ENCODE measurements at regions of chr11 and their contacts with region 1.

Region 1: GRCh38 chr11:44286268-44286880 is 23.6 kb downstream of the ALX4 start:
- DNase-seq: peak; percentile 55
- ATAC-seq: peak; percentile 79
- H3K4me3 Mint-ChIP-seq: no peak overlapping the region
- H3K27ac Mint-ChIP-seq: peak overlapping the region; percentile 16
- H3K4me1 Mint-ChIP-seq: no peaks in the 10 kb centered on the region
- H3K27me3 Mint-ChIP-seq: peaks cover 16% of the 10 kb centered on the region
- CTCF ChIP-seq: peak; percentile 44

Region 2: DNA sequence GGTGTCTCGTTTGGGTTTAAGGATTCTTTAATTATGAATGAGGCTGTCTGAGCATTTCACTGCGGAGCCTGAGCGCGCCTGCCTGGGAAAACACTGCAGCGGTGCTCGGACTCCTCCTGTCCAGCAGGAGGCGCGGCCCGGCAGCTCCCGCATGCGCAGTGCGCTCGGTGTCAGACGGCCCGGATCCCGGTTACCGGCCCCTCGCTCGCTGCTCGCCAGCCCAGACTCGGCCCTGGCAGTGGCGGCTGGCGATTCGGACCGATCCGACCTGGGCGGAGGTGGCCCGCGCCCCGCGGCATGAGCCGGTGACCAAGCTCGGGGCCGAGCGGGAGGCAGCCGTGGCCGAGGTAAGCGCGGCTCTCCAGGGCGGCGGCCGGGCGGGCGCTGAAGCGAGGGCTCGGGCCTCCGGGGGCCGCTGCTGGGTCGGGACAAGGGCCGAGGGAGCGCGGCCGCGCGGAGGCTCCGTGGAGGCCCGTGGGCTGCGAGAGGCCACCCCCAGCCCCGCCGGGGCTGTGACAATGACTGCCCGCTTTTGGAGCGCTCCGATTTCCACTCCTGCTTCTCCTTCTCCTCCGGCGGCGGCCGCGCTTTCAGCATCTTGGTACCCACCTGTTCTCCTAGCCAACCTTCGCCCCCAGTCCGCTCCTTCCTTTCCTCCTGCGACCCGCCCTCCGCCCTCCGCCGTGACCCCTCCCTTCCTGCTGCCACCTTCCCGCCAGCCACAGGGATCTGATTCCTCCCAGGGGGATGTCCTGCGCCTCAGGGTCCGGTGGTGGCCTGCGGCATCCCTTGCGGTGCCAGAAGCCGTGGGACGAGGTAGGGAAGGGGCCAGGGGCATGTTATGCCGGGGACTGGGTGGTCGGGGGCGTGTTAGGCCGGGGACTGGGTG is 190.6 kb before region 1 on chr11 and contains the start of gene EXT2:
- CTCF ChIA-PET with region 1: no interaction called
- POLR2A ChIA-PET with region 1: no interaction called
- intact Hi-C with region 1: loop called (anchors 10 kb)
- DNase-seq: peak; percentile 85
- ATAC-seq: peak; percentile 94
- H3K4me3 Mint-ChIP-seq: peak within 1 kb of the TSS; percentile 87
- H3K27ac Mint-ChIP-seq: no peak within 1 kb of the TSS
- H3K4me1 Mint-ChIP-seq: peaks cover 24% of the 10 kb centered on the region
- H3K27me3 Mint-ChIP-seq: no peaks in the 10 kb centered on the region
- CTCF ChIP-seq: no peak
- total RNA-seq, gene EXT2: 21.9 and 22.1 TPM in 2 replicates

Region 3: DNA sequence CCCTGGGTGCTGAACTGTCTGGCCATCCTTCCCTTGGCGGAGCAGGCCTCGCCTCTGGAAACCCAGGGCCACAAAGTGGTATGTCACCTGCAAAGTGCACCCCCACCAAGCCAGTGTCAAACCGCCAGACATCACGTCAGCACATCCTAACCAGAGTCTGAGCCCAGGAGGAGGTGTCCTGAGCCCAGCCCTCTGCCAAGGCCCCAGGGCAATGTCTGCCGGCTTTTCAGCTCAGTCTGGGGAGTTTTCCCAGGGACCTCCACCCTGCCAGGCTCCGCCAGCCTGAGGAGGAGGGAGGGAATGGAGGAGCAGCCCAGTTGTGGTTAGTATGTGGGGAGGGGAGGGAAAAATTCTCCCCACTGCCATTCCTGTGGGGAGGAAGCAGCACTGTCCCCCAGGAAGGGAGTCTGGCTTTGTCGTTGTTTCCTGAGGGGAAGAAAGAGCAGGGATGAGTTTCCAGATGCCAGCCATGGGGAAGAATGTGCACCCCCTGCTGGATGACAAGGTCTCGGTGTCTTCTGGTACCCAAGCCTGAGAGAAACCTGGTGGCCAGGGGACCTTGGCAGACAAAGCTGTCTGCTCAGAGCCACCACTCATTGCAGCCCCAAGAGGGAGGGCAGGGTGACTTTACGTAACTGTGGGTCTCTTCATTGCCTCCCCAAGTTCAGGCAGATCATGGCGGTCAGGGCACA is 197.7 kb after region 1 on chr11:
- CTCF ChIA-PET with region 1: no interaction called
- POLR2A ChIA-PET with region 1: no interaction called
- intact Hi-C with region 1: loop called (anchors 1 kb)
- DNase-seq: no peak
- ATAC-seq: no peak
- H3K4me3 Mint-ChIP-seq: no peak overlapping the region
- H3K27ac Mint-ChIP-seq: no peak overlapping the region
- H3K4me1 Mint-ChIP-seq: no peaks in the 10 kb centered on the region
- H3K27me3 Mint-ChIP-seq: peaks cover 15% of the 10 kb centered on the region
- CTCF ChIP-seq: no peak

Region 4: GRCh38 chr11:44538375-44539054 is 252.1 kb after region 1 on chr11:
- CTCF ChIA-PET with region 1: interaction called, 27 read pairs
- POLR2A ChIA-PET with region 1: no interaction called
- intact Hi-C with region 1: no loop called
- DNase-seq: peak; percentile 67
- ATAC-seq: peak; percentile 97
- H3K4me3 Mint-ChIP-seq: no peak overlapping the region
- H3K27ac Mint-ChIP-seq: no peak overlapping the region
- H3K4me1 Mint-ChIP-seq: peaks cover 3% of the 10 kb centered on the region
- H3K27me3 Mint-ChIP-seq: peaks cover 19% of the 10 kb centered on the region
- CTCF ChIP-seq: peak; percentile 37

Region 5: DNA sequence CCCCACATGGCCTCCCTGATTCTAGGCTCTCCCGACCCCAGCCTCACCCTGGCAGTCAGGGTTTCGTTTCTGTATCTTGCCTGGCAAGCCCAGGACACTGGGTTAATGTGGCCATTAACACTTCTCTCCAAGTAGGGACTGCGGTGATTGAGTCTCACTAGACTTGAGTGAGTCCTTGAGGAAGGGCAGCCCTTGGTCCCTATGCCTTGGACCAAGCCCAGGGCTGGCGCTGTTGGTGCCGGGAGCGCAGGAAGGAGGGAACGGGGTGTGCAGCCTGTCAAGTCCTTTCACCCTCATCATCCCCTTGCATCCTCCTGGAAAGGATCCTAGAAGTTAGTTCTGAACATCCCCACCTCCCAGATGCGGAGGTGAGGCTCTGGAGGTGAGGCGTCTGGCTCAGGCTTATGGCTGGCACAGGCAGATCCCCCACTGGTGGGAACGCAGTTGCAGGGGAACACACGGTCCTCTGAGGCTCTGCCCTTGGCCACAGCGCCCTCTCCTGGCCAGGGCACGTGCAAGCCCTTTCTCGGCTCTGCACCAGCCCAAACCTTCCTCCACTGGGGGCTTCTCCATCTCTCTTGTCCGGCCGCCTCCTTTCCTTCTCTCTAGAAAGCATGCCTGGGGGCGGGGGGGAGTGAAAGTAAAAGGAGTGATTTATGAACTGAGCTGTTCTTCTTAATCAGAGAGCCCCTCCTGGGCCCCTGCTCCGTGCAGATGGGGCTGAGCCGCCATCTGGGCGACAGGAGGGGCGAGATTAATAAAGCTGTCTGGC is 607.7 kb after region 1 on chr11:
- CTCF ChIA-PET with region 1: no interaction called
- POLR2A ChIA-PET with region 1: no interaction called
- intact Hi-C with region 1: loop called (anchors 5 kb)
- DNase-seq: no peak
- ATAC-seq: peak; percentile 60
- H3K4me3 Mint-ChIP-seq: no peak overlapping the region
- H3K27ac Mint-ChIP-seq: no peak overlapping the region
- H3K4me1 Mint-ChIP-seq: no peaks in the 10 kb centered on the region
- H3K27me3 Mint-ChIP-seq: peaks cover 8% of the 10 kb centered on the region
- CTCF ChIP-seq: no peak

Measured in activated B cell treated with CpG ODN at 0.5 μM for 24 hours (primary cell).